ENCODE measurements at regions of chr2 and their contacts with region 1.

Region 1: DNA sequence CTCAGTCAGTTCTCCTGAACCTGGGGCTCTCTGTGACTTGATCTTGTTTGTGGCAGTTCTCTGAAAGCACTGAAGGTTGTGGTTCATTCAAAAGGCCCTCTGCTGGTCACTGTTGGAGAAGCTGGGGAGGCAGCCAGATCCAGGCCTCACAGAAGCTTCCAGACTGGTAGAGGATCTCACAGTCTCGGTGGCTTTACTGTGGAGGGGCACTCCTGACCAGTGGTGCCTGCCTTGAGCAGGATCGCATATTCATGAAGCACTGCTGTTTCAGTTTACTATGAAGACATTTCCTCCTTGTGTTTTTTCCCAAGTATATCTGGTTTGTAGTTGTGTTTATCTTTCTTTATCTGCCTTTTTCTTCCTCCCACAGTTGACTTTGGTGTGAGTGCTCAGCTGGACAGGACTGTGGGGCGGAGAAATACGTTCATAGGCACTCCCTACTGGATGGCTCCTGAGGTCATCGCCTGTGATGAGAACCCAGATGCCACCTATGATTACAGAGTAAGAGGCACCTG is 133.9 kb downstream of the MAP4K4 start:
- DNase-seq: peak; percentile 49 to 67 (median 57)
- H3K4me3 ChIP-seq: no peak overlapping the region
- H3K4me3 Mint-ChIP-seq: peak overlapping the region in 4 of 8 donors; percentile 18 to 64 (median 32)
- H3K27ac ChIP-seq: no peak overlapping the region
- H3K27ac Mint-ChIP-seq: peak overlapping the region in 5 of 7 donors; percentile 15 to 77 (median 44)
- H3K4me1 ChIP-seq: peaks cover 53% of the 10 kb centered on the region
- H3K4me1 Mint-ChIP-seq: peaks cover 46 to 52% (median 51%) of the 10 kb centered on the region in 4 donors
- H3K27me3 ChIP-seq: no peaks in the 10 kb centered on the region
- H3K27me3 Mint-ChIP-seq: no peaks in the 10 kb centered on the region

Region 2: DNA sequence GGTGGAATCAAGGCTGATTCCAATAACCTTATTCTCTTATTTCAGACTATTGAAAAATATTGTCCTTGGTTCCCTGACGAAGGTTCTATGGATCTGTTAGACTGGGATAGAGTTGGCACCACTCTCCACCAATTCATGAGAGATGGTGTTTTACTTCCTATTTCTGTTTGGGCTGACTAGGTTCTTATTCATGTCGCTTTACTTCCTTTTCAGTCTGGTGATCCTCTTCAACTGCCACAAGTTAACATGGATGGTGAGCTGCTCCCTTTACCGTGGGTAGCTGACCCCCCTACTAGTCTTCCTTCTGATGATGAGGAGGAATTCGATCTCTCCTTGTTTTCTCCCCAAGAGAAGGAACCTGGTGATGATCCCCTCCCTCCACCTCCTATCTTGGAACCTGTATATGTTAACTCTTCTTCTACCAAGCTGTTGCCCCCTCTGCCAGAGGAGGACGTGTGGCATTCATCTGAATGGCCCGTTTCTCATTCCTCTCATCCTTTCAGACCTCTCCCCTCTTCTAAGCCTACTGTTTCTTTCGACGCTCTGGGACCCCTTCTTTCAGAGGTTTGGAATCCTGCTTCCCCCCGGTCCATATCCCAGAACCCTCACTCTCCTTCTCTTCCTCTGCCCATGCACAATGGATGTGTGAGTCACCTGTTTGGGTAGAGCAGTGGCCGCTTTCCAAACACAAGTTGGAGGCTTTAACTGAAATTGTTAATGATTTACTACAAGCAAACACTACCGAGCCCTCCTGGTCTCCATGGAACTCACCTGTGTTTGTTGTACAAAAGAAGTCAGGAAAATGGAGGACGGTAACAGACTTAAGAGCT is 592.3 kb before region 1 on chr2:
- CTCF ChIA-PET with region 1: no interaction called
- POLR2A ChIA-PET with region 1: no interaction called
- intact Hi-C with region 1: loop called (anchors 2 kb)
- DNase-seq: no peak
- H3K4me3 ChIP-seq: no peak overlapping the region
- H3K4me3 Mint-ChIP-seq: no peak overlapping the region
- H3K27ac ChIP-seq: no peak overlapping the region
- H3K27ac Mint-ChIP-seq: no peak overlapping the region
- H3K4me1 ChIP-seq: no peaks in the 10 kb centered on the region
- H3K4me1 Mint-ChIP-seq: peaks cover 0 to 9% (median 3%) of the 10 kb centered on the region in 4 donors
- H3K27me3 ChIP-seq: no peaks in the 10 kb centered on the region
- H3K27me3 Mint-ChIP-seq: no peaks in the 10 kb centered on the region

Region 3: GRCh38 chr2:101387151-101387807 is 444.1 kb before region 1 on chr2 and contains the start of gene CREG2:
- CTCF ChIA-PET with region 1: interaction called, 11 read pairs
- POLR2A ChIA-PET with region 1: no interaction called
- intact Hi-C with region 1: no loop called
- DNase-seq: peak in 4 of 5 donors; percentile 56 to 63 (median 62)
- H3K4me3 ChIP-seq: peak within 1 kb of the TSS in 1 of 2 donors; percentile 38
- H3K4me3 Mint-ChIP-seq: peak within 1 kb of the TSS; percentile 75 to 89 (median 83)
- H3K27ac ChIP-seq: no peak within 1 kb of the TSS
- H3K27ac Mint-ChIP-seq: no peak within 1 kb of the TSS
- H3K4me1 ChIP-seq: peaks cover 15% of the 10 kb centered on the region
- H3K4me1 Mint-ChIP-seq: peaks cover 4 to 11% (median 8%) of the 10 kb centered on the region in 4 donors
- H3K27me3 ChIP-seq: peaks cover 17% of the 10 kb centered on the region
- H3K27me3 Mint-ChIP-seq: peaks cover 30 to 43% of the 10 kb centered on the region in 2 donors
- total RNA-seq, gene CREG2: not detected

Region 4: GRCh38 chr2:101473911-101474701 is 357.3 kb before region 1 on chr2:
- CTCF ChIA-PET with region 1: no interaction called
- POLR2A ChIA-PET with region 1: no interaction called
- intact Hi-C with region 1: loop called (anchors 2 kb)
- DNase-seq: peak in 4 of 5 donors; percentile 23 to 39 (median 36)
- H3K4me3 ChIP-seq: peak overlapping the region; percentile 26 to 63
- H3K4me3 Mint-ChIP-seq: peak overlapping the region; percentile 82 to 94 (median 89)
- H3K27ac ChIP-seq: no peak overlapping the region
- H3K27ac Mint-ChIP-seq: peak overlapping the region in 4 of 7 donors; percentile 35 to 84 (median 62)
- H3K4me1 ChIP-seq: peaks cover 17% of the 10 kb centered on the region
- H3K4me1 Mint-ChIP-seq: peaks cover 5 to 12% (median 7%) of the 10 kb centered on the region in 4 donors
- H3K27me3 ChIP-seq: no peaks in the 10 kb centered on the region
- H3K27me3 Mint-ChIP-seq: no peaks in the 10 kb centered on the region

Region 5: GRCh38 chr2:101697124-101698013 is 134.0 kb before region 1 on chr2 and contains the start of gene MAP4K4:
- CTCF ChIA-PET with region 1: interaction called, 6 read pairs
- POLR2A ChIA-PET with region 1: interaction called, 19 read pairs
- intact Hi-C with region 1: no loop called
- DNase-seq: peak; percentile 65 to 85 (median 69)
- H3K4me3 ChIP-seq: peak within 1 kb of the TSS; percentile 66 to 86
- H3K4me3 Mint-ChIP-seq: peak within 1 kb of the TSS; percentile 92 to 96 (median 94)
- H3K27ac ChIP-seq: peak within 1 kb of the TSS; percentile 66
- H3K27ac Mint-ChIP-seq: peak within 1 kb of the TSS; percentile 89 to 98 (median 95)
- H3K4me1 ChIP-seq: peaks cover 44% of the 10 kb centered on the region
- H3K4me1 Mint-ChIP-seq: peaks cover 14 to 30% (median 20%) of the 10 kb centered on the region in 4 donors
- H3K27me3 ChIP-seq: no peaks in the 10 kb centered on the region
- H3K27me3 Mint-ChIP-seq: no peaks in the 10 kb centered on the region
- total RNA-seq, gene MAP4K4: 105 to 114 TPM

Region 6: GRCh38 chr2:101717071-101717845 is 114.2 kb before region 1 on chr2:
- CTCF ChIA-PET with region 1: interaction called, 10 read pairs
- POLR2A ChIA-PET with region 1: interaction called, 5 read pairs
- intact Hi-C with region 1: no loop called
- DNase-seq: peak; percentile 61 to 79 (median 68)
- H3K4me3 ChIP-seq: peak overlapping the region in 1 of 2 donors; percentile 17
- H3K4me3 Mint-ChIP-seq: peak overlapping the region; percentile 50 to 79 (median 72)
- H3K27ac ChIP-seq: peak overlapping the region; percentile 67
- H3K27ac Mint-ChIP-seq: peak overlapping the region; percentile 82 to 96 (median 93)
- H3K4me1 ChIP-seq: peaks cover 98% of the 10 kb centered on the region
- H3K4me1 Mint-ChIP-seq: peaks cover 60 to 87% (median 71%) of the 10 kb centered on the region in 4 donors
- H3K27me3 ChIP-seq: no peaks in the 10 kb centered on the region
- H3K27me3 Mint-ChIP-seq: no peaks in the 10 kb centered on the region

Region 7: DNA sequence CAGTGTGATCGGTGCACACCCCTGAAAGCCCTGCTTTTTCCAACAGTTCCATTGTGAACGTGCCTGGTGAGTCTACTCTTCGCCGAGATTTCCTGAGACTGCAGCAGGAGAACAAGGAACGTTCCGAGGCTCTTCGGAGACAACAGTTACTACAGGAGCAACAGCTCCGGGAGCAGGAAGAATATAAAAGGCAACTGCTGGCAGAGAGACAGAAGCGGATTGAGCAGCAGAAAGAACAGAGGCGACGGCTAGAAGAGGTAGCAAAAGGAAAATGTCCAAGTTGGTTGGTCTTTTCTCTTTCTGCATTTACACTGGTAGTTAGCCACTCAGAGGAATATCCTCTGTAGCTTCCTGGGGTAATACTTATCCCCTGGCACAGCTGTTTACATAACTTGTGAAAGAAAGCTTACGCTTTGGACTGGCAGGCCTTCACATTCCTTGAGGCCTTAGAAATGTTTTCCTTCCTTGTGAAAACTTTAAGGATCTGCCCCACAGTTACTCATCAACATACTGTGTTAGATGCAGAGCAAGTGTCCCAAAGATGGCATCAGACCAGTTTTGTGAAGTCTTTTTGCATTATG is 12.7 kb after region 1 on chr2:
- CTCF ChIA-PET with region 1: interaction called, 12 read pairs
- POLR2A ChIA-PET with region 1: no interaction called
- intact Hi-C with region 1: no loop called
- DNase-seq: no peak
- H3K4me3 ChIP-seq: no peak overlapping the region
- H3K4me3 Mint-ChIP-seq: no peak overlapping the region
- H3K27ac ChIP-seq: no peak overlapping the region
- H3K27ac Mint-ChIP-seq: peak overlapping the region in 1 of 7 donors; percentile 3
- H3K4me1 ChIP-seq: peaks cover 20% of the 10 kb centered on the region
- H3K4me1 Mint-ChIP-seq: peaks cover 24 to 44% (median 38%) of the 10 kb centered on the region in 4 donors
- H3K27me3 ChIP-seq: no peaks in the 10 kb centered on the region
- H3K27me3 Mint-ChIP-seq: no peaks in the 10 kb centered on the region

Region 8: GRCh38 chr2:102399499-102400141 is 568.2 kb after region 1 on chr2:
- CTCF ChIA-PET with region 1: no interaction called
- POLR2A ChIA-PET with region 1: no interaction called
- intact Hi-C with region 1: no loop called
- DNase-seq: no peak
- H3K4me3 ChIP-seq: no peak overlapping the region
- H3K4me3 Mint-ChIP-seq: no peak overlapping the region
- H3K27ac ChIP-seq: no peak overlapping the region
- H3K27ac Mint-ChIP-seq: peak overlapping the region in 1 of 7 donors; percentile 30
- H3K4me1 ChIP-seq: no peaks in the 10 kb centered on the region
- H3K4me1 Mint-ChIP-seq: peaks cover 13 to 26% (median 19%) of the 10 kb centered on the region in 4 donors
- H3K27me3 ChIP-seq: no peaks in the 10 kb centered on the region
- H3K27me3 Mint-ChIP-seq: no peaks in the 10 kb centered on the region

Region 9: DNA sequence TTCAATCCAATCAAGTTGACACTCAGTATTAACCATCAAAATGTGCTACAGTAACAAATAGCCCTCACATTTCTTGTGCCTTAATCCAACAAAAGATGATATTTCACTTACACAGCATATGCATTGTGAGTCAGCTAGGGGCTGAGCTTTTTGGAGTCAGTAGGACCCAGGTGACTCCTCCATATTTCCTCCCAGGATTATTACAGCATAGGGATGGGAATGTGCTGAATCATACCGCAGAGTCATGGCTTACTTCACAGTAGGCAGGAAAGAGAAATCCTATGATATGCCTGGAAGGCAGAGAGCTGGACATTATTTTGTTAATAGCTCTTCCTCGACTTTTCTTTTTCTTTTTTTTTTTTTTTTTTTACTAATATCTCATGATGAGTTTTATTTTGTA is 1083.7 kb after region 1 on chr2:
- CTCF ChIA-PET with region 1: no interaction called
- POLR2A ChIA-PET with region 1: no interaction called
- intact Hi-C with region 1: no loop called
- DNase-seq: no peak
- H3K4me3 ChIP-seq: no peak overlapping the region
- H3K4me3 Mint-ChIP-seq: no peak overlapping the region
- H3K27ac ChIP-seq: no peak overlapping the region
- H3K27ac Mint-ChIP-seq: no peak overlapping the region
- H3K4me1 ChIP-seq: no peaks in the 10 kb centered on the region
- H3K4me1 Mint-ChIP-seq: no peaks in the 10 kb centered on the region
- H3K27me3 ChIP-seq: no peaks in the 10 kb centered on the region
- H3K27me3 Mint-ChIP-seq: no peaks in the 10 kb centered on the region

Measured in CD4-positive, alpha-beta memory T cell (primary cell).